ENCODE measurements at regions of chr3 and their contacts with region 1.

Region 1: DNA sequence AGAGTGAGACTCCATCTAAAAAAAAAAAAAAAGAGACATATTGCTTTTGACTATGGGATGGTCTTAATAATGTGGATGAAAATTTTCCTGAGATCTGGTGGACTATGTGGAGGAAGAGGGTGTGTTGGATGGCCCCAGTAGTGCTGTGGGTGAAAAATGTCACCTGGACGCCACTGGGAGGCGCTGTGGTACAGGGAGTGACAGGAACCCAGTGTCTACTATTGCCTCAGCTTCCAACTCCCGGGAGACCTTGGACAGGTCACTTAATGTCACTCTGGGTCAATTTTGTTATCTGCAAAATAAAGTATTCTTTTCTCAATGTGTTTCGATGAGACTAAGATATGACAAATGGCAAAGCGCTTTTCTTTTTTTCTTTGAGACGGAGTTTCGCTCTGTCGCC is 27.7 kb upstream of the DCP1A start:
- DNase-seq: peak; percentile 63 to 85 (median 64)
- ATAC-seq: peak; percentile 99
- H3K4me3 ChIP-seq: no peak overlapping the region
- H3K4me1 ChIP-seq: no peaks in the 10 kb centered on the region
- CTCF ChIP-seq: peak; percentile 50

Region 2: GRCh38 chr3:53703630-53704362 is 328.8 kb after region 1 on chr3:
- intact Hi-C with region 1: loop called in 1 of 2 experiments (anchors 5 kb)
- DNase-seq: no peak
- ATAC-seq: no peak
- H3K4me3 ChIP-seq: no peak overlapping the region
- H3K4me1 ChIP-seq: no peaks in the 10 kb centered on the region
- CTCF ChIP-seq: no peak

Region 3: DNA sequence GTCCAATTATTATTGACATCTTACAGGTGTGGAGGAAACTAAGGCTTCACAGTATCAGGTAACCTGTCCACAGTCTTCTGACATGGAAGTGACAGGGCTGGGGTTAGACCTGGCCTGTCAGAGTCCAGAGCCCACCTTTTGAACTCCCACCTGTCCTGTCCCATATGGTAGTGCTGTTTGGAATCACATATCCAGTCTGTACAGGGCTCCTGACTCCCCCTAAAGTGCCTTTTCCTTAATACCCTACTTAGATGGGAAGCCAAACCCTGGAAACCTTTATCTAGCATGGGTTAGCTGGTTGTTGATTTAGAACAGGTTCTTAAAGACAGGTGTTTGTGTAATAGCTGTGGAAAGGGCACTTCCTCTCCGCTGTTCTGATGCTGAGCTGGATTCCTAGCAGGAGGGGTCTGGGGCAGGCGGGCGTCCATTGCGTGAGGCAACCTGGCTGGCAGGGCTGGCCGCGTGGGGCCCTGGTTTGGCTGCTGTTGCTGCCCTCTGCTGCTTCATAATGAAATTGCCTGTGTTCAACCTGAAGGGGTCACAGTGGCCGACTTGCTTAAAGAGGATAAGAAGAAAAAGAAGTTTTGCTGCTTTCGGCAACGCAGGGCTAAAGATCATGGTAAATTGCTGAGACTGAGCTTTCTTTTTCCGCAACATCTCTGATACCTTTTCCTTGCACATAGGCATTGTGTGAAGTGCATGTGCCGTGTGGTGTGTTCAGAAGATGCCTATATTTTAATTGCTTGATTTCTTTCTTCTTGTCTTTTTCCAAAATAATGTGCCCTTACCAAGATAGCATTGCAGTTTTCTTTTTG is 335.0 kb after region 1 on chr3:
- intact Hi-C with region 1: loop called in 1 of 2 experiments (anchors 5 kb)
- DNase-seq: peak in 2 of 3 donors; percentile 66 to 77
- ATAC-seq: peak; percentile 88
- H3K4me3 ChIP-seq: no peak overlapping the region
- H3K4me1 ChIP-seq: no peaks in the 10 kb centered on the region
- CTCF ChIP-seq: peak; percentile 62

Measured in mucosa of descending colon (tissue), 3 donors.